Activated B cell treated with CpG ODN at 0.5 μM for 24 hours (primary cell): ENCODE measurements at regions of chr17 and their contacts with region 1.

Region 1: GRCh38 chr17:11997147-11997846 is at the start of gene ZNF18:
- DNase-seq: peak; percentile 97
- ATAC-seq: peak; percentile 97
- H3K4me3 Mint-ChIP-seq: peak within 1 kb of the TSS; percentile 93
- H3K27ac Mint-ChIP-seq: peak within 1 kb of the TSS; percentile 81
- H3K4me1 Mint-ChIP-seq: peaks cover 19% of the 10 kb centered on the region
- H3K27me3 Mint-ChIP-seq: no peaks in the 10 kb centered on the region
- CTCF ChIP-seq: no peak
- total RNA-seq, gene ZNF18: 10.1 and 11.8 TPM in 2 replicates

Region 2: DNA sequence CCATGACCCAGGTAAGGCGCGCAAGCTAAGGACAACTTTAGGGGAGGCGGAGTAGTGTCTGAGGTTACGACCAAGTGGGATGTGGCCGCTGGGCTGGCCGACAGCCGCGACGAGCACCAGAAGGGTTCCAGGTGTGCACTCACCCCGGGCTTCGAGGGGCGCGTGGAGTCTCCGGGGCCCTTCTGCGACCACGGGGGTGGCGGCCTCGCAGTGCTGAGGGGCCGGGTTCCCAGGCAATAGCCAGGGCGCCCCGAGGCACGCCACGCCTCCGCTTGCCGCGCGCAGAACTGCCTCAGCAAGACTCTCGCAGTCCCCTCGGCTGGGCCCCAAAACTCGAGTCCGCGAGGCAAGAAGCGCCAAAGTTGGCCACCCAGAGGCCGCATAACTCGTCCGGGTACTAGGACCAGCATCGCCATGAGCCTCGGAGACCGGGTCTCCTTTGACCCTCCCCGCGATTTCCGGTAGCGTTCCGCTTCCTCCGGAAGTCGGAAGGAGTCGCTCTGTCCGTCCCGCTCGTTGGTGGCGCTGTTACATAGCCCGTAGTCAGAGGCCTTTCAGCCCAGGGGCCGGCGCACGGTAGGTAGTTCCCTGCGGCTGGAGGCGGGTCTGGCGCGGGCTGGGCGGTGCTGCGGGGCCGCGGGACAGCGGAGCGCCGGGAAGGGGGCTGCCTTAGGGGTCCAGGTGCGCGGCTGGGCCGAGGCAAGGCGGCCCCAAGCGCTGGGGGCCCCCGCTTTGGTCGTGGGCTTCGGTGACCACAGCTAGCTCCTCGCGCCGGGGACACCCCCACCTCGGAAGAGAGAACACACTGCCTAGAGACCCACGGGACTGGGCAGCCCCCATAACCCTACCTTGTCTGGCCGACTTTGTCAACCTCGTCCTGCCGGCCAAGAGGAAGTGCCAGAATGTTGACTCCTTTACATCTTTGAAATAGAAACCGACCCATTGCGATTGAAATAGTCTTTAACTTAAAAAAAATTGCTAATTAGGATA is 1299.9 kb before region 1 on chr17 and contains the starts of genes ADPRM and SCO1:
- CTCF ChIA-PET with region 1: no interaction called
- POLR2A ChIA-PET with region 1: interaction called, 3 read pairs
- intact Hi-C with region 1: loop called (anchors 1 kb)
- DNase-seq: peak; percentile 85
- ATAC-seq: peak; percentile 97
- H3K4me3 Mint-ChIP-seq: peak within 1 kb of the TSS; percentile 92
- H3K27ac Mint-ChIP-seq: peak within 1 kb of the TSS; percentile 92
- H3K4me1 Mint-ChIP-seq: peaks cover 51% of the 10 kb centered on the region
- H3K27me3 Mint-ChIP-seq: no peaks in the 10 kb centered on the region
- CTCF ChIP-seq: no peak
- total RNA-seq, gene ADPRM: 14.1 and 14.8 TPM in 2 replicates
- total RNA-seq, gene SCO1: 27.9 and 33.3 TPM in 2 replicates

Region 3: GRCh38 chr17:11909348-11909747 is 87.9 kb before region 1 on chr17:
- CTCF ChIA-PET with region 1: no interaction called
- POLR2A ChIA-PET with region 1: no interaction called
- intact Hi-C with region 1: no loop called
- DNase-seq: no peak
- ATAC-seq: no peak
- H3K4me3 Mint-ChIP-seq: no peak overlapping the region
- H3K27ac Mint-ChIP-seq: no peak overlapping the region
- H3K4me1 Mint-ChIP-seq: no peaks in the 10 kb centered on the region
- H3K27me3 Mint-ChIP-seq: no peaks in the 10 kb centered on the region
- CTCF ChIP-seq: no peak

Region 4: DNA sequence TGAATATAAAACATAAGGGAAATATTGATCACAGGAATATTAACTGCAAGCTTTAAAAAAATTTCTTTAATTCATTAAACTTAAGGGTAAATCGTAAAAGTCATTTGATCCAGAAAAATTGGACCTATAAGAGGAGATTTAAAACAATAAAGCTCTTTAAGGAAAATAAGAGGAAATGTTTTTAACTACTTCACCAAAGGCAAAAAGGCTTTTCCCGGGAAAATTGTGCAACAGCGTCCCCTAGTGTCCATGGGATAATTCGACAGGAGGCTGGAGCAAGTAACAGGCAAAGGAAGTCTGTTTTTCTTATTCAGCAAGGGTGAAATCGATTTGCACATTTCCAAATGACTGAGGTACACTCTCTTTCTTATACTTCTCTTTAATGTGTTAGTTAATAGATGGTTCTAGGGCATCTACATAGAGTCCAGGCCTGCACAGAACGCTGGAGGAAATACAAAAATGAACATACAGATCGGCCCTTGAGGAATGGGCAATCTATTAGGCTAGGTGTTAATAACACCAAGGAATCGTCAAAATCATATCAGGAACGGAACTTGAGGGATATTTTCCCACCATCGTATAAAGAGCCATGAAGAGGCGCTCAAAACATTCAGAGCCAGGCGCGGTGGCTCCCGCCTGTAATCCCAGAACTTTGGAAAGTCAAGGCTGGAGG is 61.4 kb before region 1 on chr17:
- CTCF ChIA-PET with region 1: no interaction called
- POLR2A ChIA-PET with region 1: no interaction called
- intact Hi-C with region 1: no loop called
- DNase-seq: no peak
- ATAC-seq: no peak
- H3K4me3 Mint-ChIP-seq: no peak overlapping the region
- H3K27ac Mint-ChIP-seq: no peak overlapping the region
- H3K4me1 Mint-ChIP-seq: no peaks in the 10 kb centered on the region
- H3K27me3 Mint-ChIP-seq: peaks cover 2% of the 10 kb centered on the region
- CTCF ChIP-seq: no peak

Region 5: DNA sequence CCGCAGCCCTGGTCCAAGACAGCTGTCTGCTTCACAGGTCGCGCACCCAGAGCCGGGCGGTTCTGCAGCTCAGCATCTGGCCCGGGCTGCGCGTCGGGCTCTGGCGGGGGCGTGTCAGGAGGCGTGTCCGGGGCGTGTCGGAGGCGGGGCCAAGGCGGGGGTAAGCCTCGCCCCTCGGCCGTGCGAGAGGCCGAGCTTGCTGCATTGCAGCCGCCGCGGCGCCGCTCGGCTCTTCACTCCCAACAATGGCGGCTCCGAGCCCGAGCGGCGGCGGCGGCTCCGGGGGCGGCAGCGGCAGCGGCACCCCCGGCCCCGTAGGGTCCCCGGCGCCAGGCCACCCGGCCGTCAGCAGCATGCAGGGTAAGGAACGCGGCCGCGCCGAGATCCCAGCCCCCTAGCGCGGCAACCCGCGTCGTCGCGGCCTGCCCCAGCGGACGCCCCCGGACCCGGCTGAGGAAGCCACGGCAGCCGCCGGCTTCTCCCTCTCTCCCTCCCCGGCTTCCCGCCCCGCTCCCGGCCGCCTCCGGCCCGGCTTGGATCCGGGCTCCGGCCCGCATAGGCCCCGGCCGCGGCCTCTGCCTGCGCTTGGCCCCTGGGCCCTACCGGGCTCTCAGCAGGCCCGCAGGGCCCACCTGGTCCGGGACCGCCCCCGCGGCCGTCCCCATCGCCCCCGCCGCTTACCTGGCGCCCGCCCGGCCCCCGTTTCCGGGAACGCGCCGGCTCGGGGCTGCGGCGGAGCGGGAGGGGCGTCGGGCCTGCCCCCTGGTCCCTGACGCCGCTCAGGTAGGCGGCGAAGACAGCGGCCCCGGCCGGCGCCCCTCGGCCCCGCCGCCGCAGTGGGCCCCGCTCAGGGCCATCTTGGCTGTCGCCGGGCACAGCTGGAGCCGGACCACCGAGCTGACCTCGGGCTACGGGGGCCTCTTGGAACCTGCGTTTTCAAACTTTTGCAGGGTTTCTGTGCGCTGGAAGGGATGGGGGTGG is 23.6 kb after region 1 on chr17 and contains the start of gene MAP2K4:
- CTCF ChIA-PET with region 1: interaction called, 11 read pairs
- POLR2A ChIA-PET with region 1: interaction called, 191 read pairs
- intact Hi-C with region 1: loop called (anchors 1 kb)
- DNase-seq: peak; percentile 100
- ATAC-seq: peak; percentile 97
- H3K4me3 Mint-ChIP-seq: peak within 1 kb of the TSS; percentile 79
- H3K27ac Mint-ChIP-seq: peak within 1 kb of the TSS; percentile 73
- H3K4me1 Mint-ChIP-seq: peaks cover 35% of the 10 kb centered on the region
- H3K27me3 Mint-ChIP-seq: peaks cover 2% of the 10 kb centered on the region
- CTCF ChIP-seq: no peak
- total RNA-seq, gene MAP2K4: 32.5 and 32.9 TPM in 2 replicates

Region 6: DNA sequence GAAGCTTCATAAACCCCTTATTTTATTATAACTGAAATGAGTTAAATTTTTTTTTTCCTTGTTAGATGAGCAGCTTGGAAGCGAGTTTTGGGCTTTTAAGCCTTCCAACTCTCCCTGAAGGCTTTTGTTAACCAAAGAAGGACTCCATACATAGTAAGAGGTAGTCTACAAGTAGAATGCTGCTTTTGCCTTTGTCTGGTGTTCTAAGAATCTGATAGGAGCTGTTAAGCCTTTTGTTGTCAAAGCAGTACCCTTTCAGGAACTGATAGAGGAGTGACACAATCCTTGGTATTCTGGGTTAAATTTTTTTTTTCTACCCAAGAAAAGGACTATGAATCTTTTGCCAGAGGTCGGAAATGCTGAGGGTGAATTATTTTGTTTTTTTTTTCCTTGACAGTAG is 49.5 kb after region 1 on chr17:
- CTCF ChIA-PET with region 1: no interaction called
- POLR2A ChIA-PET with region 1: interaction called, 10 read pairs
- intact Hi-C with region 1: no loop called
- DNase-seq: no peak
- ATAC-seq: no peak
- H3K4me3 Mint-ChIP-seq: no peak overlapping the region
- H3K27ac Mint-ChIP-seq: no peak overlapping the region
- H3K4me1 Mint-ChIP-seq: peaks cover 52% of the 10 kb centered on the region
- H3K27me3 Mint-ChIP-seq: no peaks in the 10 kb centered on the region
- CTCF ChIP-seq: no peak

Region 7: GRCh38 chr17:13017659-13018459 is 1020.6 kb after region 1 on chr17 and contains the start of gene ELAC2:
- CTCF ChIA-PET with region 1: no interaction called
- POLR2A ChIA-PET with region 1: interaction called, 25 read pairs
- intact Hi-C with region 1: loop called (anchors 1 kb)
- DNase-seq: peak; percentile 88
- ATAC-seq: peak; percentile 98
- H3K4me3 Mint-ChIP-seq: peak within 1 kb of the TSS; percentile 98
- H3K27ac Mint-ChIP-seq: peak within 1 kb of the TSS; percentile 96
- H3K4me1 Mint-ChIP-seq: peaks cover 17% of the 10 kb centered on the region
- H3K27me3 Mint-ChIP-seq: peaks cover 2% of the 10 kb centered on the region
- CTCF ChIP-seq: no peak
- total RNA-seq, gene ELAC2: 90.3 and 90.6 TPM in 2 replicates